A549 (cell line): ENCODE measurements at regions of chr2 and their contacts with region 1.

Region 1: DNA sequence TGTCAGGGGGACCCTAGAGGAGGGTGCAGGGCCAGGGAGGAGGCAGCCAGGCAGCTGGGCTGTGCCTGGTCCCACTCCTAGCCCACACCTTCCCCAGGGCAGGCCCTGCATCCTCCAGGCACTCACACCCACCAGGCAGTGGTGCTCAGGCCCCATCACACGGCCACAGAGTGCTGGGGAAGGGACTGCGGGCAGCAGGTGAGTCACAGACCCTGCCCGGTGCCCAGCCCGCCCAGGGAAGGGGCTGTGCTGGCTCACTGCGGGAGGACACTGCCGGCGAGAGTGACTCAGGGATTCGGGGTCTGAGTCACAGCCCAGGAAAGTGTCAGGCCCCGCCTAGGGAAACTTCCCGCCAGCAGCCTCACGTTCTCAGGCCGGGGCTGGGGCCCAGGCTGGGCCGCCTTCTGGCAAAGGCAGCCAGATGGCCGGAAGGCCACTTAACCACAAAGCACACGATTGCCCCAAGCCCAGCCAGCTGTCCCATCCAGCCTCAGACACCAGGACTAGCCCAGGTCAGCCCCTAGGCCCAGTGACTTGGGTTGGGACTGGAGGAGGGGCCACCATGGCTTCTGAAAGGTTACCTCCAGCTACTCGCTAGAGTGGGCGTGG is 42.2 kb downstream of the BIN1 start:
- DNase-seq: peak; percentile 95 to 98
- ATAC-seq: peak; percentile 88 to 96
- H3K4me3 ChIP-seq: no peak overlapping the region
- H3K27ac ChIP-seq: peak overlapping the region; percentile 95 to 99
- H3K4me1 ChIP-seq: peaks cover 32% of the 10 kb centered on the region
- CTCF ChIP-seq: peak; percentile 39; the same call in 2 of the 3 replicates
- EP300 ChIP-seq: peak in 1 of 2 experiments; percentile 74; a peak in 1 of 5 replicates
- POLR2A ChIP-seq: peak; percentile 31
- RAD21 ChIP-seq: peak; percentile 57 to 75

Region 2: DNA sequence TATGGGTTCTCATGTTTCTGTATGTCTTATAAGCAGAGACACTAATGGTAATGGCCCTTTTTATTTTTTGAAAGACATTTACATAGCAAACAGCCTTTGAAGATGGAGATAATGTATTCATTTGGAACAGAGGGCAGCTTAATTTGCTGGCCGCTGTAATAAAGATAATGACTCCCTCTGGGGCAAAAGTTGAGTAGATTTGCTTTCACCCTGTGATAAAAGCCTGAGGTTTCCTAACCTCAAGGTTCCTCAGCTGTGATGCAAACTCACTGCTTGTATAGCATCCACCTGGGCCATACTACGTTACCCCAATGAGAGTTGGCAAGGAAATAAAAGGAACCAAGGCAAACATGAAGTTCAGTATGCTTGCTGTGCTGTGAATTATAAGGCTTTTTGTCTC is 111.3 kb before region 1 on chr2:
- CTCF ChIA-PET with region 1: no interaction called
- POLR2A ChIA-PET with region 1: no interaction called
- DNase-seq: no peak
- ATAC-seq: no peak
- H3K4me3 ChIP-seq: no peak overlapping the region
- H3K27ac ChIP-seq: no peak overlapping the region
- H3K4me1 ChIP-seq: no peaks in the 10 kb centered on the region
- CTCF ChIP-seq: no peak
- EP300 ChIP-seq: no peak
- POLR2A ChIP-seq: no peak
- RAD21 ChIP-seq: no peak

Region 3: DNA sequence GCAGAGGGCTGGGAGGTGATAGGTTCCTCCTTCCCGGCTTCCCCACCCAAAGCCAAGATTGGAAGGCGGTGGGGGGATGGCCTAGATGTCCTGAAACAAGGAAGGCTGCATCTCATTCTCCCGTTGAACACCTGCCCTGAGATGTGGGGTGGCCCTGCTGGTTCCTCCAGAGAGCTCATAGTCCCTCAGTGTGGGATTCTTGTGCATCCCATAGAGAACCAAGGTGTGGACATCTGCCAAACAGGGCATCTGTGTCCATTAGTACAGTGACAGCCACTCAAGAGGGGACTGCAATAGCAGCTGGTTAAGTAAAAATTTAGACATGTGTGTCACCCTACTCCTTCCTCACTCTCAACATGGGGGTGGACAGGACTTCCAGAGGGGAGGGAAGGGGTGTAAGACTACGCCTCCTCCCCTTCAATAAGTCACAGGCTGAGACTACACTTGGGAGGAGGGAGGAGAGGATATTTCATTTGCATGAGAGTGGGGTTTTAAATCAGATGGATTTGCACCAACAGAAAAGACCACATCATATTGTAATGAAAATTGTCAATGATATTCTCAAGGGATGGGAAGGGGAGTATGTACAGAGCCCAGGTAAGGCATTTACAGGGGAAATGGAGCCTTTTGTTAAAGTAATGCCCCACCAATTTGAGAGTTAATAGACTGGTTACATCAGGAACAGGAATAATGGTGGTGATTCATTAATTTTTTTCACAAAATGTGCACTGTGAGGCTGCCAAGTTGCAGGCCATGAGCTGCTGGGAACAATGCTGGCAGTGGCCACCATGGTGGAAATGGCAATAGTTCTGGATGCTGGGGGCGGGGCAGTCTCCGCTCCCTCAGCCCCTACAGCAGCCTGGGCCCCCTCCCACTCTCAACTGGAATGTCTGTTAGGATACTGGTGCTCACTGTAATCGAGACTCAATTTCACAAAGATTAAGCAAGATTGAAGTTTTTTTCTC is 85.4 kb before region 1 on chr2:
- CTCF ChIA-PET with region 1: no interaction called
- POLR2A ChIA-PET with region 1: no interaction called
- DNase-seq: no peak
- ATAC-seq: no peak
- H3K4me3 ChIP-seq: no peak overlapping the region
- H3K27ac ChIP-seq: no peak overlapping the region
- H3K4me1 ChIP-seq: no peaks in the 10 kb centered on the region
- CTCF ChIP-seq: no peak
- EP300 ChIP-seq: no peak
- POLR2A ChIP-seq: no peak
- RAD21 ChIP-seq: no peak

Region 4: DNA sequence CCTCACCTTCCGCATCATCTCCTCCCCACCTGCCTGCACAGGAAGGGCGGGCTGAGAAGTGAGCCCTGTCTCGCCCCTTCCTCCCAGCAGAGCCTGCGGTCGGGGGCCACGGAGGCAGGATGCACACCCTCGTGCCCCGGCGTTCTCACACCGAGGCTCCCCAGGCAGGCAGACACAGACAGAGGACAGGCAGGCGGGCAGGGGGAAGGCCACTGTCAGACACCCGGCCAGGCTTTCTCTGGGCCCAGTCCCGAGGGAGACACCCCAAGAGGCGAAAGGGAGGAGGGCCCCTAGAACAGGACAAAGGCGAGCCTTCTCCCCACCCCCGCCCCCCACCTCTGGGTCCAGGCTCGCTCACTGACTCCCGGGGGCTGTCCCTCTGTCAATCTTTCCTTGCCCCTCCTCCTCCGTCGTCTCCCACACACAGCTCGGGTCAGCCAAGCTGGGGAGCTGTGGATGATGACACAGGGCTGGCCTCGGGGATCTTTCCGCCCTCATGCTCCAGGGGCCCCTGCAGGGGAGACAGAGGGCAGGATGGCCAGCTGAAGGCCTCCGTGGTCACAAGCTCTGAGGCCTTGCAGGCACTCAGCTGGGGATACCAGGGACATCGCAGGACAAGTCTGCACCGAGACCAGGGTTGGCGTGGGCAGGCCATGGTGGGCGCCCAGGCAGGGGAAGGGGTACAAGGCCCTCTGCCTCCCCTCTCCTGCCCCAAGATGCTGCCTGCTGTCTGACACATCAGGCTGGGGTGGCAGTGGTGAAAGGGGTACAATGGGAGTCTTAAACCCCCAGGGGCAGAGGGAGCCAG is 17.3 kb after region 1 on chr2:
- CTCF ChIA-PET with region 1: interaction called, 45 read pairs
- POLR2A ChIA-PET with region 1: no interaction called
- DNase-seq: no peak
- ATAC-seq: no peak
- H3K4me3 ChIP-seq: no peak overlapping the region
- H3K27ac ChIP-seq: peak overlapping the region in 1 of 2 experiments; percentile 43; a peak in 1 of 6 replicates
- H3K4me1 ChIP-seq: peaks cover 56% of the 10 kb centered on the region
- CTCF ChIP-seq: no peak
- EP300 ChIP-seq: no peak
- POLR2A ChIP-seq: no peak
- RAD21 ChIP-seq: no peak